CD4-positive, alpha-beta T cell (primary cell): ENCODE measurements at regions of chr9 and their contacts with region 1.

Region 1: DNA sequence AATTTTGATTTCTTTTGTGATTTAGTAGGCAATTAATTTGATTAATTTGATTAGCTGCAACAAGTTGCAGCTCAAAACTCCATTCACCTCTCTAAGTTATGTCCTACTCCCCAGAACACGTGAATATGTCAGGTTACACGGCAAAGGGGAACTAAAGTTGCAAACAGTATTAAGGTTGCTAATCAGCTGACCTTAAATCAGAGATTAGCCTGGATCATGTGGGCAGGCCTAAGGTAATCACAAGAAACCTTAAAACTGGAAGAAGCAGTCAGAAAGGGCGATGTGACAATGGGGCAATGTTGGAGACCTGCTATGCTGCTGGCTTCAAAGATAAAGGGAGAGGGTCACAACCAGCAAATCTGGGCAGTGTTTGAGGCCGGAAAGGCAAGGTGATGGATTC is 47.3 kb upstream of the ANXA1 start:
- DNase-seq: no peak
- ATAC-seq: no peak
- H3K4me3 ChIP-seq: no peak overlapping the region
- H3K4me3 Mint-ChIP-seq: no peak overlapping the region
- H3K27ac ChIP-seq: no peak overlapping the region
- H3K27ac Mint-ChIP-seq: no peak overlapping the region
- H3K4me1 ChIP-seq: no peaks in the 10 kb centered on the region
- H3K4me1 Mint-ChIP-seq: no peaks in the 10 kb centered on the region
- H3K27me3 ChIP-seq: no peaks in the 10 kb centered on the region
- H3K27me3 Mint-ChIP-seq: no peaks in the 10 kb centered on the region
- CTCF ChIP-seq: no peak

Region 2: GRCh38 chr9:73183917-73184861 is 79.8 kb after region 1 on chr9:
- CTCF ChIA-PET with region 1: interaction called, 36 read pairs
- POLR2A ChIA-PET with region 1: interaction called, 5 read pairs
- intact Hi-C with region 1: loop called (anchors 1 kb)
- DNase-seq: peak in 3 of 14 experiments; percentile 71 to 75 (median 74)
- ATAC-seq: no peak
- H3K4me3 ChIP-seq: no peak overlapping the region
- H3K4me3 Mint-ChIP-seq: no peak overlapping the region
- H3K27ac ChIP-seq: no peak overlapping the region
- H3K27ac Mint-ChIP-seq: no peak overlapping the region
- H3K4me1 ChIP-seq: no peaks in the 10 kb centered on the region
- H3K4me1 Mint-ChIP-seq: no peaks in the 10 kb centered on the region
- H3K27me3 ChIP-seq: peaks cover 3 to 21% of the 10 kb centered on the region in 2 experiments
- H3K27me3 Mint-ChIP-seq: peaks cover 11% of the 10 kb centered on the region
- CTCF ChIP-seq: peak; percentile 78